Right ventricle myocardium inferior (tissue), 1 donor: ENCODE measurements at regions of chr15 and their contacts with region 1.

Region 1: DNA sequence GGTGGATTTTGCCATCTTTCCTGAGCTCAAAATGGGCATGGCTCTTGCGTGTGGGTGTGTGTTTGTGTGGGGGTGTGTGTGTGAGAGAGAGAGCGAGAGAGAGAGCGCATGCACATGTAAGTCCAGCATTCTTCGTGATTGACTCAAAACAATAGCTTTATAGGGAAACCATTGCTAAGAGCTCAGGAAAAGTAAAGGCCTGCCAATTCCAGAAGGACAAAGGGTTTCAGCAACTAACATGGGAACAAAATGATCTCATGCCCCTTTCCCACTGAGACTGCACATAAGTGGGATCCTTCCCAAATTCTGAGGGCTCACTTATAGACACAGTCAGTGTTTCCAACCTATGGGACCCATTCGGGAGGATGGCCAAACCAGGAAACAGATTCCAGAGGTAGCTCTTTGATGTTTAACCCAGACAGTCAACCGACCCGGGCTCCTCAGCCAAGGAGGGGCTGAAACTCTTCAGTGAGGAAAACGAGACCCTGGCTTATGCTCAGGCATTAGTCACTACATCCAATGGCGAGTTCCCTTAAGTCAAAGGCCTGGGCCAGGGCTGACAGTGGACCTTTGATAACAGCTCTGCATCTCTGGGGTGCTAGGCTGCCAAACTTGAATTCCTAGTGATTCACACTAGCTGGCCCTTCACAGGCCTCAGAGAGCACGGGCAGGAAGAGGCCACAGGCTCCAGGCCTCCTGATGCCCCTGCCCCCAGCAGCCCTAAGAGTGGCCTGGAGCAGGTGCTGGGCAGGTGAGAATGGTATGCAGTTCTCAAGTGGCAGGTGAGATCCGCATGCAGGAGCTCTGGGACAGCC is 305.0 kb upstream of the C2CD4B start:
- DNase-seq: no peak
- ATAC-seq: peak; percentile 86

Region 2: DNA sequence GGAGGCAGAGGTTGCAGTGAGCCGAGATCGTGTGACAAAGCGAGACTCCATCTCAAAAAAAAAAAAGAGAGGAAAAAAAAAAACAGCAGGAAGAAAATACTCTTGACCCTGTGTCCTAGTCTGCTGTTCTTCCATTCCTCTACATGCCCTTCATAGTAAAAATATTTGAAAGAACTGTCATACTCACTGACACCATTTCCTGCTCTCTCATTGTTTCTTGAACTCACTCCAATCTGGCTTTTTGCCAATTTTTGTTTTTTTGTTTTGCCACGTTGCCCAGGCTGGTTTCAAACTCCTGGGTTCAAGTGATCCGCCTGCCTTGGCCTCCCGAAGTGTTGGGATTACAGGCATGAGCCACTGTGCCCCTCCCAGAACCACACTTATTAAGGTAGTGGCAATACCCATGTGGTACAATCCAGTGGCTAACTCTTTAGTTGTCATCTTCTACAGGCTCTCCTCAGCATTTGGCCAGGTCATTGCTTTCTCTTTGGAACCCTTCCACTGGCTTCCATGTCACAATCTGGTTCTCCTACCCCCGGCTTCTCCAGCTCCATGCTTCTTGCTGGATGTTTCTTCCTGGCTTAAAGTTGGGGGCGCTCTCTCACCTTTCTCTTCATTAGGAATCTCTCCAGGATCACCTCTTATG is 66.8 kb before region 1 on chr15:
- intact Hi-C with region 1: no loop called
- DNase-seq: no peak
- ATAC-seq: peak; percentile 43

Region 3: GRCh38 chr15:62482785-62483429 is 12.8 kb after region 1 on chr15:
- intact Hi-C with region 1: no loop called
- DNase-seq: no peak
- ATAC-seq: peak; percentile 29

Region 4: GRCh38 chr15:62524848-62525247 is 54.8 kb after region 1 on chr15:
- intact Hi-C with region 1: no loop called
- DNase-seq: no peak
- ATAC-seq: no peak

Region 5: DNA sequence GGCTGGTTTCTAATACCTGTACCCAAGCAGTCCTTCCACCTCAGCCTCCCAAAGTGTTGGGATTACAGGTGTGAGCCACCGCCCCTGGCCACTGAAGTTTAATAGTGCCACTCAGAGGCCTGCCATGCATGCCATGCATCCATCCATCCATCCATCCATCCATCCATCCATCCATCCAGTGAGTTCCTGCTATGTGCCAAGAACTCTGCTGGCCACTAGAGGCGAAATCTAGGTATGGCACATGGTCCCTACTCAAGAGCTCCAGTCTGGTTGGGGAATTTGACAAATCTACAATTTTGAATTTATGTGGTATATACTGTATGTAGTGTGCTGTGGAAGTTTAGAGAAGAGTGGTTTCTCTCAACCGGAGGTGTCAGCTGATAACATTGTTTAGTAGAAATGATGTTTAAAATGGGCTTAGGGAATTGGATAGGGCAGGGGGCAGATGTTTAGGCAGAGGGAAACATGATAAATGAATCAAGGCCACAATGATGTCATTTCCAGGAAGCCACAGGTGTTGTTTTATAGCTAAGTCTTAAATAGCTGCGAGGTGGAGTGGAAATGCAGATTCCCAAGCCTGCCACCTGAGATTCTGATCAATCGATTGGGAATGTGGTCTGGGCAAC is 79.4 kb after region 1 on chr15:
- intact Hi-C with region 1: loop called (anchors 5 kb)
- DNase-seq: no peak
- ATAC-seq: no peak